ENCODE measurements at regions of chr1 and their contacts with region 1.

Region 1: GRCh38 chr1:67214420-67215174 is 48.3 kb downstream of the IL23R start:
- DNase-seq: no peak
- H3K4me3 ChIP-seq: no peak overlapping the region; a peak in 1 of 4 replicates
- H3K27ac ChIP-seq: no peak overlapping the region
- H3K4me1 ChIP-seq: no peaks in the 10 kb centered on the region; a peak in 1 of 4 replicates
- H3K27me3 ChIP-seq: no peaks in the 10 kb centered on the region
- CTCF ChIP-seq: peak; percentile 70
- EP300 ChIP-seq: no peak
- RAD21 ChIP-seq: peak; percentile 37; the same call in 1 of the 2 replicates

Region 2: DNA sequence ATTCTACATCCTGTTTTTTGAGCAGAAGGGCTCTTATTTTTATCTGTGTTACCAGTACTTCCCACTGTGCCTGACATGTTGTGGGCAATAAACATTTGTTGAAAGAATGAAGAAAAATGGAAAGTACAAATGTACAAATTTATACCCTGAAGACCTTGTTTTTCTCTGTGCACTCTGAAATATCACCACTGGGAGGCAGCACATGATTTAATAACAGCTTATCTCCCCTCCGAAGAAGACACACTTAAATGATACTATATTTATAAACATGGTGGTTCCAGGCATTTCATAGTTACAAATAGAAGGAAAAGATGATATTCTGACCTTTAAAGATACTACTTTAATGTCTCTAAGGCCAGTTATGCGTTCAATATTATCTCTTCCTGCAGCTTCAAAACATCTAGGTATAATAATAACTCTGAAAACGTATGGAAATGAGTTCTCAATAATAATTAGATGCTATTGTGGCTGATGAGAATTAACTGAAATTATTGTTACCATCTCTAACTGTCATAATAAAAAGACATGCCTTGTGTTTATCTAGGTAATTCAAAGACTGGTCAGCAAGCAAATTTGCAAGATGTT is 449.5 kb before region 1 on chr1:
- CTCF ChIA-PET with region 1: interaction called, 11 read pairs
- POLR2A ChIA-PET with region 1: no interaction called
- DNase-seq: peak; percentile 42
- H3K4me3 ChIP-seq: no peak overlapping the region
- H3K27ac ChIP-seq: no peak overlapping the region
- H3K4me1 ChIP-seq: no peaks in the 10 kb centered on the region; a peak in 1 of 4 replicates
- H3K27me3 ChIP-seq: no peaks in the 10 kb centered on the region
- CTCF ChIP-seq: peak; percentile 90
- EP300 ChIP-seq: no peak
- RAD21 ChIP-seq: peak; percentile 91

Region 3: GRCh38 chr1:67005068-67005467 is 209.5 kb before region 1 on chr1:
- CTCF ChIA-PET with region 1: interaction called, 11 read pairs
- POLR2A ChIA-PET with region 1: no interaction called
- DNase-seq: no peak
- H3K4me3 ChIP-seq: no peak overlapping the region
- H3K27ac ChIP-seq: no peak overlapping the region
- H3K4me1 ChIP-seq: no peaks in the 10 kb centered on the region
- H3K27me3 ChIP-seq: no peaks in the 10 kb centered on the region
- CTCF ChIP-seq: no peak
- EP300 ChIP-seq: no peak
- RAD21 ChIP-seq: no peak

Region 4: GRCh38 chr1:67227196-67227595 is 12.6 kb after region 1 on chr1:
- CTCF ChIA-PET with region 1: interaction called, 30 read pairs
- POLR2A ChIA-PET with region 1: no interaction called
- DNase-seq: no peak
- H3K4me3 ChIP-seq: no peak overlapping the region
- H3K27ac ChIP-seq: no peak overlapping the region
- H3K4me1 ChIP-seq: no peaks in the 10 kb centered on the region
- H3K27me3 ChIP-seq: no peaks in the 10 kb centered on the region
- CTCF ChIP-seq: no peak
- EP300 ChIP-seq: no peak
- RAD21 ChIP-seq: no peak

Region 5: DNA sequence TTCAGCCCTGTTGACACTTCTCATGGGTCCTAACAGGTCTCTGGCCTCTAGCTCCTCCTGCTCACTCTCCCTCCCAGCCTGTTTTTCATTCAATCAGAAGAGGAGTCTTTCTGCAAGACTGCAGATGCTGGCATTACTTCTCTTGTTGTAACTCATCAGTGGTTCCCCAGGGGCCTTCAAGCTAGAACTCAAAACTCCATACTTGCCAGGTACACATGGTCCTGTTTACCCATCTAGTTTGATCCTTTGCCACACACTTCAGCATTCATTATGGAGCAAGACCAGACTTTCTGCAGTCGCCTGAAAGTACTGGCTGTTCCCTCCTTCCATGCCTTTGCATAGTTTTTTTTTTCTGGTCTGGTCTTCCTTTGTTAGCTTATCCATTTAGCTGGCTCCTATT is 167.7 kb after region 1 on chr1:
- CTCF ChIA-PET with region 1: no interaction called
- POLR2A ChIA-PET with region 1: no interaction called
- DNase-seq: no peak
- H3K4me3 ChIP-seq: no peak overlapping the region
- H3K27ac ChIP-seq: no peak overlapping the region
- H3K4me1 ChIP-seq: no peaks in the 10 kb centered on the region
- H3K27me3 ChIP-seq: no peaks in the 10 kb centered on the region
- CTCF ChIP-seq: no peak
- EP300 ChIP-seq: no peak
- RAD21 ChIP-seq: no peak

Region 6: DNA sequence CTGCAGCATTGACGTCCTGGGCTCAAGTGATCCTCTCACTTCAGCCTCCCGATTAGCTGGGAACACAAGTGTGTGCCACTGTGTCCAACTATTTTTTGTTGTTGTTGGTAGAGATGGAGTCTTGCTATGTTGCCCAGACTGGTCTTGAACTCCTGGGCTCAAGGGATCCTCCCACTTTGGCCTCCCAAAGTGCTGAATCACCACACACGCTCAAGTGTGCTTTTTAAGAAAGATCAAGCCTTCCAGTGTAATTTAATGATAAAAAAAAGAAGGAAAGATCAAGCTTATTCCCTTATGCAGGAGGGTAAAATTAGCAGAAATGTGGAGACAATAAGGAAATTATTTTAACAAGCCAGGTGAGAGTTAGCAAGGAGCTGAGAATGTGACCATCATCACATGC is 276.7 kb after region 1 on chr1:
- CTCF ChIA-PET with region 1: interaction called, 13 read pairs
- POLR2A ChIA-PET with region 1: no interaction called
- DNase-seq: no peak
- H3K4me3 ChIP-seq: no peak overlapping the region
- H3K27ac ChIP-seq: no peak overlapping the region
- H3K4me1 ChIP-seq: no peaks in the 10 kb centered on the region
- H3K27me3 ChIP-seq: no peaks in the 10 kb centered on the region
- CTCF ChIP-seq: no peak
- EP300 ChIP-seq: no peak
- RAD21 ChIP-seq: no peak

Measured in SK-N-SH (cell line).